CD4-positive, alpha-beta memory T cell (primary cell): ENCODE measurements at regions of chr18 and their contacts with region 1.

Region 1: GRCh38 chr18:3447895-3448837 is 1.8 kb upstream of the TGIF1 start:
- DNase-seq: peak; percentile 84 to 91 (median 89)
- H3K4me3 ChIP-seq: peak overlapping the region; percentile 74 to 84
- H3K4me3 Mint-ChIP-seq: peak overlapping the region; percentile 93 to 98 (median 96)
- H3K27ac ChIP-seq: peak overlapping the region; percentile 94
- H3K27ac Mint-ChIP-seq: peak overlapping the region; percentile 99 to 100 (median 100)
- H3K4me1 ChIP-seq: peaks cover 21% of the 10 kb centered on the region
- H3K4me1 Mint-ChIP-seq: peaks cover 9 to 53% (median 22%) of the 10 kb centered on the region in 4 donors
- H3K27me3 ChIP-seq: no peaks in the 10 kb centered on the region
- H3K27me3 Mint-ChIP-seq: peaks cover 0 to 6% of the 10 kb centered on the region in 2 donors

Region 2: DNA sequence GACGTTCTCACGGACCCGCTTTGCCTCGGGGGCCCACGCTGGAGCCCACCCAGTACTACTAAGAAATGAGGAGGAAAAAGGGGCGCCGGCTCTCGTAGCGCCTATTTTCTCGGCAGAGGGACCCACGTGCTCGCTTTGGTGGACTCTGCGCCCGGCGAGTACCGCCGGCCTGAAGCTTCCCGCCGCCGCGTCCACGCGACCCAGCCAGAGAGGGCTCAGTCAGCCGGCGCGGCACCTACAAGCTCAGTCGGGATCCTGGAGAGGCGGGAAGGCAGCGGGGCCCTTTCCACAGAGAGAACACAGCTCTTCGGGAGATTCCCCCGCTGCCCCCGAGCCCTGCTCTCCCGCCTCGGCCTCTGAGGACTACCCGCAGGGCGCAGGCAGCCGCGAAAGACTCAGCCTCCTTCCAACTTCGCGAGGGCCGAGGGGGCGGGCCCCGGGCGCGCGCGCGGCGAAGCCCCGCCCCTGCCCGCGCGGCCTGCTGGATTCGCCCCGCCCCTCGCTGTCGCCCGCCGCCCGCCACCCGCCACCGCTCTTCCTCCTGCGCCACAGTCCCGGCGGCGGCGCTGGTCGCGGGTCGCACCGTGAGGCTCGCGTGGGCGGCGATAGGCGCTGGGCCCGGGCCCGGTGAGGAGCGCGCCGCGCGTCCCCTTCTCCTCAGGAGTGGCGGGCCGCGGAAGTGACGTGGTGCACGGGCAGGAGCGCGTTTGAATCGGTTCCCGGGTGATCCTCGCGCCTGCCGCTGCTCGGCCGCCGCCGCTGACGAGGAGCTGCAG is 792.8 kb before region 1 on chr18 and contains the start of gene SMCHD1:
- CTCF ChIA-PET with region 1: no interaction called
- POLR2A ChIA-PET with region 1: no interaction called
- intact Hi-C with region 1: loop called (anchors 10 kb)
- DNase-seq: peak; percentile 88 to 92 (median 90)
- H3K4me3 ChIP-seq: peak within 1 kb of the TSS; percentile 66 to 98
- H3K4me3 Mint-ChIP-seq: peak within 1 kb of the TSS; percentile 89 to 99 (median 98)
- H3K27ac ChIP-seq: peak within 1 kb of the TSS; percentile 99
- H3K27ac Mint-ChIP-seq: peak within 1 kb of the TSS; percentile 93 to 99 (median 98)
- H3K4me1 ChIP-seq: peaks cover 23% of the 10 kb centered on the region
- H3K4me1 Mint-ChIP-seq: peaks cover 17 to 38% (median 27%) of the 10 kb centered on the region in 4 donors
- H3K27me3 ChIP-seq: no peaks in the 10 kb centered on the region
- H3K27me3 Mint-ChIP-seq: no peaks in the 10 kb centered on the region
- total RNA-seq, gene SMCHD1: 268 to 288 TPM

Region 3: GRCh38 chr18:3261371-3262246 is 186.6 kb before region 1 on chr18 and contains the start of gene MYL12B:
- CTCF ChIA-PET with region 1: no interaction called
- POLR2A ChIA-PET with region 1: interaction called, 37 read pairs
- intact Hi-C with region 1: loop called (anchors 2 kb)
- DNase-seq: peak; percentile 83 to 91 (median 86)
- H3K4me3 ChIP-seq: peak within 1 kb of the TSS; percentile 89 to 94
- H3K4me3 Mint-ChIP-seq: peak within 1 kb of the TSS; percentile 94 to 100 (median 98)
- H3K27ac ChIP-seq: peak within 1 kb of the TSS; percentile 90
- H3K27ac Mint-ChIP-seq: peak within 1 kb of the TSS; percentile 98 to 100 (median 99)
- H3K4me1 ChIP-seq: peaks cover 81% of the 10 kb centered on the region
- H3K4me1 Mint-ChIP-seq: peaks cover 57 to 92% (median 70%) of the 10 kb centered on the region in 4 donors
- H3K27me3 ChIP-seq: no peaks in the 10 kb centered on the region
- H3K27me3 Mint-ChIP-seq: no peaks in the 10 kb centered on the region
- total RNA-seq, gene MYL12B: 199 to 219 TPM

Region 4: GRCh38 chr18:3429121-3429520 is 19.0 kb before region 1 on chr18:
- CTCF ChIA-PET with region 1: no interaction called
- POLR2A ChIA-PET with region 1: no interaction called
- intact Hi-C with region 1: no loop called
- DNase-seq: no peak
- H3K4me3 ChIP-seq: no peak overlapping the region
- H3K4me3 Mint-ChIP-seq: no peak overlapping the region
- H3K27ac ChIP-seq: no peak overlapping the region
- H3K27ac Mint-ChIP-seq: no peak overlapping the region
- H3K4me1 ChIP-seq: no peaks in the 10 kb centered on the region
- H3K4me1 Mint-ChIP-seq: no peaks in the 10 kb centered on the region
- H3K27me3 ChIP-seq: no peaks in the 10 kb centered on the region
- H3K27me3 Mint-ChIP-seq: no peaks in the 10 kb centered on the region

Region 5: DNA sequence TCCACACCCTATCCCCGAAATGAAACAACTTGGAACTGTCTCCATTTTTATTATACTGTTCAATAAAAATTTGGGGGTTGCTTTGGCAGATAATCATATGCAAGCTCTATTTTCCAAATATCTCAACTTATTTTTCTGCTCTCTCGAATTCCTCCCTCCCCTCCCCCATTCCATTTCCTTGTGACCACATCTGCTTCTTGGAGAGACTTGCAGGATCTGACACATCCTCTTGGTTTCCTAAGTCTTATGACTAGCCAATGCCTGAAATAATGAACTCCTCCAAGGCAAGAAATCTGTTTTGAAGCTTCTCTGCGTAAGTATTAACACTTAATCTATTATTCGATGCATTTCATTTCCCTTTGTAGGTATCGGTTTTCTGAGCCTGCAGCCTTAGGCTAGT is 17.9 kb after region 1 on chr18:
- CTCF ChIA-PET with region 1: interaction called, 68 read pairs
- POLR2A ChIA-PET with region 1: interaction called, 139 read pairs
- intact Hi-C with region 1: no loop called
- DNase-seq: no peak
- H3K4me3 ChIP-seq: no peak overlapping the region
- H3K4me3 Mint-ChIP-seq: peak overlapping the region in 1 of 8 donors; percentile 69
- H3K27ac ChIP-seq: no peak overlapping the region
- H3K27ac Mint-ChIP-seq: peak overlapping the region in 3 of 7 donors; percentile 24 to 68 (median 41)
- H3K4me1 ChIP-seq: peaks cover 17% of the 10 kb centered on the region
- H3K4me1 Mint-ChIP-seq: peaks cover 12 to 22% (median 17%) of the 10 kb centered on the region in 4 donors
- H3K27me3 ChIP-seq: no peaks in the 10 kb centered on the region
- H3K27me3 Mint-ChIP-seq: no peaks in the 10 kb centered on the region

Region 6: GRCh38 chr18:3593904-3594661 is 145.9 kb after region 1 on chr18:
- CTCF ChIA-PET with region 1: interaction called, 81 read pairs
- POLR2A ChIA-PET with region 1: interaction called, 164 read pairs
- intact Hi-C with region 1: loop called (anchors 1 kb)
- DNase-seq: peak; percentile 93 to 96 (median 95)
- H3K4me3 ChIP-seq: peak overlapping the region; percentile 68 to 72
- H3K4me3 Mint-ChIP-seq: peak overlapping the region; percentile 88 to 95 (median 91)
- H3K27ac ChIP-seq: peak overlapping the region; percentile 91
- H3K27ac Mint-ChIP-seq: peak overlapping the region; percentile 98 to 100 (median 99)
- H3K4me1 ChIP-seq: peaks cover 53% of the 10 kb centered on the region
- H3K4me1 Mint-ChIP-seq: peaks cover 37 to 66% (median 49%) of the 10 kb centered on the region in 4 donors
- H3K27me3 ChIP-seq: no peaks in the 10 kb centered on the region
- H3K27me3 Mint-ChIP-seq: no peaks in the 10 kb centered on the region

Region 7: DNA sequence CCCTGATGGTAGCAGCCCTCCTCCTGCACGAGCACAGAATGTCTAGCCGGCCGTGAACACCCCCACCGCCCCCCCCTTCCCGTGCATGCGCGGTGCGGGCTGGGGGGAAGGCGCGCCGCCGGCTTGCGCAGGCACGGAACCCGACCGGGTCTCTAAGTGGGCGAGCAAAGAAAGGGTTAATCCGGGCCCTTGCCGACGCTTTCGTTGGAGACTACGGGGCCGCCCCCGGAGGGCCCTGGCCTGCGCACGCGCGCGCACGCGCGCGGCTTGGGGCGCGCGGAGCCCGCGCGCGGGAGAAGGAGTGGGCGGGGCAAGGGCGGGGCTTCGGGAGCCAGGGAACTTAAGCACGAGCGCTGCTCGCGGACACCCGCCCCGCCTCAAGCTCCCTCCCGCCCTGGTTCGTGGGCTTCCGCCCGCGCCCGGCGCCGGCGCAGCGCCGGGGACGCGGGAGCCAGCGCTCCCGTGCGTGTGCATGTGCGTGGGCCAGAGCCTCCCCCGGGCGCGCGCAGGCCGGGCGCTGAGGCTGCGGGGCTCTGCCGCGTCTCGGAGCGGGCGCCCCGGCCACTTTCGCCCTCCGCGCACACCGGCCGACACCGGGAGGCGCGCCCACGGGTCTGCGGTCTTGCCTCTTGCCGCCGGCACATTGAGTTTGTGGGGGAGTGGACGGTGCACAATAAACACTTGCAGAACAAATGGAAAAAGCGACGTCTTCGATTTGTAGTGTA is 1848.0 kb after region 1 on chr18:
- CTCF ChIA-PET with region 1: no interaction called
- POLR2A ChIA-PET with region 1: interaction called, 3 read pairs
- intact Hi-C with region 1: loop called (anchors 2 kb)
- DNase-seq: peak; percentile 94 to 96 (median 95)
- H3K4me3 ChIP-seq: peak overlapping the region; percentile 69 to 77
- H3K4me3 Mint-ChIP-seq: peak overlapping the region; percentile 89 to 98 (median 96)
- H3K27ac ChIP-seq: peak overlapping the region; percentile 84
- H3K27ac Mint-ChIP-seq: peak overlapping the region; percentile 89 to 99 (median 97)
- H3K4me1 ChIP-seq: peaks cover 28% of the 10 kb centered on the region
- H3K4me1 Mint-ChIP-seq: peaks cover 18 to 49% (median 36%) of the 10 kb centered on the region in 4 donors
- H3K27me3 ChIP-seq: no peaks in the 10 kb centered on the region
- H3K27me3 Mint-ChIP-seq: peaks cover 0 to 3% of the 10 kb centered on the region in 2 donors